GM12878 (cell line): ENCODE measurements at regions of chr2 and their contacts with region 1.

Region 1: DNA sequence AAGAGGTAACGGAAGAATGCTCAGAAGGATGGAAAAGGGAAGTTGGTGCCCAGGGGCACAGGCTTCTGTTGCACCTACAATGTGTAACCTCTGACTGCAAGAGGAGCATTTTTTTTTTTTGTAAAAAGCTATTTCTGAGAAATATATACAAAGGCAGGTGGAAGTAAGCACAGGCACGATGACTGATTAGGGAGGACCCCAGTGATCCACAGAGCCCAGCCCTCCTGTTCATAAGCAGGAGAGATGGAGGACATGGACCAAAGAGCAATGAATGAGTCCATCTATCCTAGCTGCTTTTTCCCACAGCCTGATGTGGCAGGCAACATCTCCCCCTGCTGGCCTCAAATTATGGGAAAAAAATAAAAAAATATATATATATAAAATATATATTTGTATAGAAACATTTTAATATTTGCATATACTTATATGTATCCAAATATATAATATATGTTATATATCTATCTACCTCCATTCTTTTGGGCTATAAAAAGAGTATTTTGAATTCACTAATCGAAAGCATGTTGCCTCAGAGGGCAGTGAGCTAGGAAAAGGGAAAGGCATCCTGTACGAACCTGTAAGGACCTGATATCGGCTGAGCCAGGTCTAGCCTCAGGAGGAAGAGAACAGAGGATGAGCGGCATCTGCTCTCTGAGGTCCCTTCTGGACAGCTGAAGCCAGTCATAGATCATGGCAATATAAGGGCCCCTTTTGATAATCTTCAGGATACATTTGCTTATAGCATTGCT is 166.0 kb upstream of the STK17B start:
- DNase-seq: no peak
- ATAC-seq: peak; percentile 67
- H3K4me3 ChIP-seq: no peak overlapping the region
- H3K27ac ChIP-seq: peak overlapping the region; percentile 48
- H3K4me1 ChIP-seq: peaks cover 7% of the 10 kb centered on the region; the same call in 1 of the 2 replicates
- H3K27me3 ChIP-seq: no peaks in the 10 kb centered on the region
- CTCF ChIP-seq: peak in 2 of 3 experiments; percentile 28 to 40; a peak in 3 of 6 replicates
- EP300 ChIP-seq: no peak
- POLR2A ChIP-seq: no peak
- RAD21 ChIP-seq: peak; percentile 52

Region 2: GRCh38 chr2:196131384-196131937 is 205.9 kb before region 1 on chr2:
- CTCF ChIA-PET with region 1: no interaction called
- POLR2A ChIA-PET with region 1: no interaction called
- RAD21 ChIA-PET with region 1: no interaction called
- SMC1A ChIA-PET with region 1: interaction called, 7 read pairs
- in situ Hi-C with region 1: no loop called
- intact Hi-C with region 1: loop called (anchors 5 kb)
- DNase-seq: peak; percentile 47
- ATAC-seq: peak; percentile 74
- H3K4me3 ChIP-seq: no peak overlapping the region
- H3K27ac ChIP-seq: no peak overlapping the region
- H3K4me1 ChIP-seq: no peaks in the 10 kb centered on the region
- H3K27me3 ChIP-seq: no peaks in the 10 kb centered on the region
- CTCF ChIP-seq: peak; percentile 39 to 53 (median 49); a peak in 5 of 6 replicates
- EP300 ChIP-seq: no peak
- POLR2A ChIP-seq: no peak
- RAD21 ChIP-seq: peak; percentile 62

Region 3: DNA sequence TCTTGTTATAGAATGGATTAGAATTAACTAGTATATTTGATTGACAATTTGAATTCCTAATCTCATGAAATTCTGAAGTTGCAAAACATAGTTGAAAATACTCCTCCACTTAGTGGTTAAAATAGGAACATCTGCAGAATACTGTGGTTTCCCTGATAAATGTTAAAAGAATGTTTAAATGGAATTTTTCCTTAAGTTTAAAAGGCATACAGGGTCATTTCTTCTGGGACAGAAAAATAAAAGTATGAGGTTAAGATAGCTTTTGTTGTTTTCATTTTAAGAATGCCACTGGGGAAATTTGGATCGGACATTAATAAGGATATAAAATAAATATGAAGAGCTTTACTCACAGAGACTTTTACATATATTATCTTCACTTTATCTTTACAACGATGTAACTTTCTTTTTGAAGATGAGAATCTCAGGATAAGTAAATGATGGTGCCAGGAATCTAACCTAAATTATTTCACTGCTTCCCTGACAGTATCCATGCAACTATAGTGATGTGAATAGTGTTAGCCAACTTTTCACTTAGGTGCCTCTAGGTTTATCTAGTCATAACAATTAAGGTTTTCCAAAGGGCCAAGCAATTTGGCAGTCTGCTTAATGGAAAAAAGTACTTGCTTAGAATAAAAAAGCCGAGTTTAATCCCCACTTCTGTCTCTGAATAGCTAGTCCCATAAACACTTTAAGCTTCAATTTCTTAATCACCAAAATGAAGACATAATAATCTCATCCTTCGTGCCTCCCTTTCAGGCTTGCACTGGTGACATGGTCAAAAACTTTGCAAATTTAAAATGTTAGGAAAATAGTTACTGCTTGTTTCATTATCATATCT is 14.2 kb before region 1 on chr2:
- CTCF ChIA-PET with region 1: interaction called, 10 read pairs
- POLR2A ChIA-PET with region 1: no interaction called
- RAD21 ChIA-PET with region 1: interaction called, 5 read pairs
- SMC1A ChIA-PET with region 1: interaction called, 10 read pairs
- in situ Hi-C with region 1: no loop called
- intact Hi-C with region 1: no loop called
- DNase-seq: no peak
- ATAC-seq: no peak
- H3K4me3 ChIP-seq: no peak overlapping the region
- H3K27ac ChIP-seq: no peak overlapping the region
- H3K4me1 ChIP-seq: no peaks in the 10 kb centered on the region
- H3K27me3 ChIP-seq: no peaks in the 10 kb centered on the region
- CTCF ChIP-seq: no peak
- EP300 ChIP-seq: no peak
- POLR2A ChIP-seq: no peak
- RAD21 ChIP-seq: no peak

Region 4: DNA sequence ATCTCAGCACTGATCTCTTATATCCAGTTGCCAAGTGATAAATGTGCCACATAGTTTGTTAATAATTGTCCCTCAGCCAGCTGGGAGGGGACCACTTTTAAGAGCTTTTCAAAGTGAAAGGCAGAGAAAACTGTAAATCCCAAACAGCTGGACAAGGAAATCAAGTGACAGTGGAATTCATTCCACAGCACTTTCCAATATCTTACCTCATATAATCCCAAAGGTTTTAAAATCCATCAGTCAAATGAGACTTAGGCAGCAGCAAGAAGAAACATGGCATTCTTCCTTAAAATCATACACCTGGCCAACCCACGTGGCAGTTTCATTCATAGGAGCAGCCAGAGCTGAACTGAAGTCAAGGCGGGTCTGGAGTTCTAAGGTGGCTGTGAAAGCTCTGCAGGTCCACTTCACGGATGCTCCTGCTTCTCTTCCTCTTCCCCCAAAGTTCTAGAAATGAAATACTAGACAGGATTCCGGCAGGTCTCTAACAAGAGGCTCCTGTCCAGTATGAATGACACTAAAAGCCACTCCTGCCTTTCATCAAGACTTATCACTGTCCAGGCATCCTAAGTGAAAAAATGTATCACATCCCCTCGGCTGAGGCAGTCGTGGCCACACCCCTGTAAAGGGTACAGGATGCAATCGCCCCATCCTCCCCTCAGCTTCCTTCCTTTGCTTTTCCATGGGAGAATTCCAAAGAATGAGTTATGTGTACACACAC is 24.4 kb after region 1 on chr2:
- CTCF ChIA-PET with region 1: interaction called, 17 read pairs
- POLR2A ChIA-PET with region 1: interaction called, 3 read pairs
- RAD21 ChIA-PET with region 1: interaction called, 9 read pairs
- SMC1A ChIA-PET with region 1: interaction called, 5 read pairs
- in situ Hi-C with region 1: no loop called
- intact Hi-C with region 1: no loop called
- DNase-seq: no peak
- ATAC-seq: no peak
- H3K4me3 ChIP-seq: no peak overlapping the region
- H3K27ac ChIP-seq: no peak overlapping the region
- H3K4me1 ChIP-seq: no peaks in the 10 kb centered on the region; the same call in 1 of the 2 replicates
- H3K27me3 ChIP-seq: no peaks in the 10 kb centered on the region
- CTCF ChIP-seq: no peak
- EP300 ChIP-seq: no peak
- POLR2A ChIP-seq: no peak
- RAD21 ChIP-seq: no peak

Region 5: DNA sequence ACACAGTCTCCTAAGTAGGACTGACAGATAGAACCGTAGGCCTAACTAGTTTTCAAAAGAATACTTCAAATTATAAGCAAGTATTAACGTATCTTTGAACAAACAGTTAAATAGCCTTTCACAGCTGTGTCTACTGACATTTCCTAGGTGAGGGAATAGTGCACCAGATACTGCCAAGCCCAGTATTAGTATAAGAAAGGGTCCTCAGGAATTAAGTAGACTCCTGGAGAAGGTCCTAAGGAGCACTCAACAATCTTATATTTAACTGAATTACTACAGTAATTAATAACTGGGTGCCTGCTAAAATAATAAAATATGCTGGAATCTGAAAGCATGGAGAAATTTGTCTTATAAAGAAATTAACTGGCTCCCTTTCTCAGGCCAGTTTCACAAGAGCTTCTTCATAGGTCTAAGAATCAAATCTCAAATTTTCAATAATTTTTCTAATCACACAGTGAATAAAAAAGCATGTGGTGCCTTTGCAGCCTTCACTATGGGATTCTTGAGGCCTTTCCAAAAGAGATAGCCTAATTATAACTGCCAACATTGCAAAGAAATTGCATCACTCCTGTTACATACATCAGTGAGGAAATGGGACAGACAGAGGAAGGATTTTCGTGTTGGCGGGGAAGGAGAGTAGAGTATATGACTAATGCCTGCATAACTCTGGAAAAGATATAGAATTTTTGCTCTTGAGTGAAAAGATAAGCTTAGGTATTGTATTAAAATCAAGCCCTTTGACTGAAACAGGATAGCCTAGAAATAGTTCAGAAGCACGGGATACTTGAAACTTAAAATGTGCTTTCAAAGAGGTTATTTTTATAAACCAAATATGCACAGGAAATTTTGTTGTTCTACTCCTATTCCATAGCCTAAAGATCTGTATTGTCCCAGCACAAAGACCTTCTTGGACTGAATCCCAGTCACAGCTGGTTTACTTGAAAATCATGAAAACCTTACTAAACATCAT is 62.6 kb after region 1 on chr2:
- CTCF ChIA-PET with region 1: interaction called, 5 read pairs
- POLR2A ChIA-PET with region 1: no interaction called
- RAD21 ChIA-PET with region 1: interaction called, 5 read pairs
- SMC1A ChIA-PET with region 1: interaction called, 5 read pairs
- in situ Hi-C with region 1: no loop called
- intact Hi-C with region 1: loop called (anchors 2 kb)
- DNase-seq: no peak
- ATAC-seq: no peak
- H3K4me3 ChIP-seq: peak overlapping the region; percentile 4; the same call in 1 of the 2 replicates
- H3K27ac ChIP-seq: peak overlapping the region; percentile 44
- H3K4me1 ChIP-seq: no peaks in the 10 kb centered on the region
- H3K27me3 ChIP-seq: no peaks in the 10 kb centered on the region
- CTCF ChIP-seq: no peak
- EP300 ChIP-seq: no peak
- POLR2A ChIP-seq: no peak
- RAD21 ChIP-seq: no peak